ENCODE measurements at regions of chr16 and their contacts with region 1.

Region 1: GRCh38 chr16:58306327-58306726 is 11.5 kb upstream of the PRSS54 start:
- DNase-seq: peak; percentile 82
- H3K4me3 Mint-ChIP-seq: no peak overlapping the region
- H3K27ac Mint-ChIP-seq: no peak overlapping the region
- H3K4me1 Mint-ChIP-seq: no peaks in the 10 kb centered on the region
- H3K27me3 Mint-ChIP-seq: peaks cover 2% of the 10 kb centered on the region

Region 2: GRCh38 chr16:58086426-58087208 is 219.7 kb before region 1 on chr16:
- CTCF ChIA-PET with region 1: no interaction called
- intact Hi-C with region 1: no loop called
- DNase-seq: no peak
- H3K4me3 Mint-ChIP-seq: no peak overlapping the region
- H3K27ac Mint-ChIP-seq: no peak overlapping the region
- H3K4me1 Mint-ChIP-seq: no peaks in the 10 kb centered on the region
- H3K27me3 Mint-ChIP-seq: no peaks in the 10 kb centered on the region

Region 3: GRCh38 chr16:58102665-58103392 is 203.5 kb before region 1 on chr16:
- CTCF ChIA-PET with region 1: no interaction called
- intact Hi-C with region 1: loop called (anchors 10 kb)
- DNase-seq: no peak
- H3K4me3 Mint-ChIP-seq: no peak overlapping the region
- H3K27ac Mint-ChIP-seq: no peak overlapping the region
- H3K4me1 Mint-ChIP-seq: peaks cover 2% of the 10 kb centered on the region
- H3K27me3 Mint-ChIP-seq: no peaks in the 10 kb centered on the region

Region 4: GRCh38 chr16:58222532-58223316 is 83.6 kb before region 1 on chr16:
- CTCF ChIA-PET with region 1: no interaction called
- intact Hi-C with region 1: no loop called
- DNase-seq: no peak
- H3K4me3 Mint-ChIP-seq: no peak overlapping the region
- H3K27ac Mint-ChIP-seq: no peak overlapping the region
- H3K4me1 Mint-ChIP-seq: no peaks in the 10 kb centered on the region
- H3K27me3 Mint-ChIP-seq: no peaks in the 10 kb centered on the region

Measured in activated naive CD4-positive, alpha-beta T cell treated with anti-CD3 and anti-CD28 coated beads for 36 hours (primary cell).